Aorta (tissue), 5 donors: ENCODE measurements at regions of chr4 and their contacts with region 1.

Region 1: DNA sequence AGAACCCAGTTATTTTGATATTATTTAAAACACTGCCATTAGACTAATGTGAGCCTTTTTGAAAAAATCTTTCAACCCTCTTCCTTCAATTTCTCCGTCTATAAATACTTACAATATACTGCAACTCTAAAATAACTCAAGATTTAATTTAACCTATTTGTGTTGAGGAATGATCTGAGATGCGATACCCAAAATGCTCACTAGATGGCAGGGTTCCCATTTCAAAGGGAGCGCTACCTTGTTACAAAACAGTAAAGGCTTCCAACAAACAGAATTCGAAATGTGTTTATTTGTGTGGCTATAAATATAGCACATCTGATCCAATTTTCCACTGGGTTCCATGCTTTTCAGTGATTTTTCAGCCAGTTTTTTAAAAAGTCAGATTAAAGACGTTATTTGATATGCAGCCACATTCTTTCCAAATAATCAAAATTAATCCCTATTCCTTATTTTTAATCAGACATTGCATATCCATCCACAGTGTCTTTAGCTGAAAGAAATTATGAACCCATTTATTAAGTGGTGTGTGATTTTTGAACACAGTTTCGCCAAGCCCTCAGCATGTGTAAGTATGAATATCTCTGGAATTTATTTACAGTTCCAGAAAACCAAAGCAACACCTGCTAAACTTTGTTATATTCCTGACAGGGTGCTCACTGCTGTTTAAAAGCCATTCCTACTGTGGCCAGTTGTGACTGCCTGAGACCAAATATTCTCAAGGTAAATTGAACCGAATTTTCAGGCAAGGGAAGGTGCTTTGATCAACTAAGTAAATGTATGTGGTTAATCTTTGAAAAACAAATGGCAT is 668.0 kb upstream of the LCORL start:
- DNase-seq: no peak
- ATAC-seq: peak; percentile 67
- H3K4me3 ChIP-seq: no peak overlapping the region
- H3K27ac ChIP-seq: no peak overlapping the region
- H3K4me1 ChIP-seq: no peaks in the 10 kb centered on the region
- H3K27me3 ChIP-seq: no peaks in the 10 kb centered on the region

Region 2: DNA sequence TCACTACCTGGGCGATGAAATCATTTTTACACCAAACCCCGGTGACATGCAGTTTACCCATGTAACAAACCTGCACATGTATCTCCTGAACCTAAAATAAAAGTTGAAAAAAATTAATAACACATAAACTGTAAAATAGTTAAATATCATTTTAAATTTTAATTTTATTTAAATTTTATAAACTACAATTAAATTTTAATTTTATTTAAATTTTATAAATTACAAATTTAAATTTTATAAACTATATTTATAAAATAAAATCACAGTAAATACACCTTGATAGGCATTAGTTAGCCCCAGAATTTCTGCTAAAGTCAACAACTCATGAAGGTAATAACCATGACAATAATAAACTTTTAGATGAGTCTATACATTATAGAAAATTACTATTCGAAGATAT is 87.7 kb after region 1 on chr4:
- intact Hi-C with region 1: no loop called
- DNase-seq: no peak
- ATAC-seq: no peak
- H3K4me3 ChIP-seq: no peak overlapping the region
- H3K27ac ChIP-seq: no peak overlapping the region
- H3K4me1 ChIP-seq: no peaks in the 10 kb centered on the region
- H3K27me3 ChIP-seq: no peaks in the 10 kb centered on the region

Region 3: DNA sequence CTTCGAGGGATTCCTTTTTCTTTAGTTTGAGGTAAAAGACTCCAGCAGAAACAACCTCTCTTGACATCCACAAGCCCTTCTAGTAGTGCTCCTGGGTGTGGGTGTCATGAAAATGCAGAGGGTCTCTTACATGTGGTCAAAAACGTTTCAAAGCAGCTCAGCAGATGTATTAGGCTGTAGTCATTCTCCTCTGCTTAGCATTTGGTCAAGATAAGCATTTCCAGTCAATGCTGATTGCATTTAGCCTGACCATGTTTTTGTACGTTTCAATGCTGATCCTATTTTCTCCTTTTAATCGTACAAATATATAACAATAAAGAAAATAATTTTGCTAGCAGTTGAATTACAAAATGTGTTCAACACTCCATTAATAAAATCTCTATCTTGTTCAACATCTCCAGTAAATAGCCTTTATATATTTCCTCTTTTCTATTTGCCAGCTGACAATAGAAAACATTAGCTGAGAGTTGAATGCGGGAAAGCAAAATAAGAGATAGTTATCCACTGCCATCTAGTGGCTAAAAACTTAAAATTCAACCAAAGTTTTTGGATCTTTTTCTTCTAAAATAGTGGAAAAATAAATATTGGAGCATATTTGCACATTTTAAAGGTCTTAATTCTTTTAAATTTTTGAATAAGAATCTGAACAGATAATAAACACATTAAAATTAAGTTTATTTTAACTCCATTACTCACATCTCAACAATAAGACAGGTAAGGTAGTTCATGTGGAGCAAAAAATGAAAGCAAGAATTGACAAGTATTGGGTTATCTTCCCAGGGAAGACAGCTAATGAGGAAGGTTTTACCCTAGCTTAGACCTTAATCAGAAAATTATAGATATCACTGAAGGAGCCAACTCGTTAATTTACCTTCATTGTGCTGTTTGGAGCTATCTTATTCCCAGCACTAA is 1995.6 kb after region 1 on chr4:
- intact Hi-C with region 1: loop called (anchors 5 to 10 kb)
- DNase-seq: no peak
- ATAC-seq: no peak
- H3K4me3 ChIP-seq: no peak overlapping the region
- H3K27ac ChIP-seq: no peak overlapping the region
- H3K4me1 ChIP-seq: no peaks in the 10 kb centered on the region
- H3K27me3 ChIP-seq: no peaks in the 10 kb centered on the region